Activated CD8-positive, alpha-beta T cell treated with anti-CD3 and anti-CD28 coated beads for 36 hours (primary cell): ENCODE measurements at regions of chr17 and their contacts with region 1.

Region 1: DNA sequence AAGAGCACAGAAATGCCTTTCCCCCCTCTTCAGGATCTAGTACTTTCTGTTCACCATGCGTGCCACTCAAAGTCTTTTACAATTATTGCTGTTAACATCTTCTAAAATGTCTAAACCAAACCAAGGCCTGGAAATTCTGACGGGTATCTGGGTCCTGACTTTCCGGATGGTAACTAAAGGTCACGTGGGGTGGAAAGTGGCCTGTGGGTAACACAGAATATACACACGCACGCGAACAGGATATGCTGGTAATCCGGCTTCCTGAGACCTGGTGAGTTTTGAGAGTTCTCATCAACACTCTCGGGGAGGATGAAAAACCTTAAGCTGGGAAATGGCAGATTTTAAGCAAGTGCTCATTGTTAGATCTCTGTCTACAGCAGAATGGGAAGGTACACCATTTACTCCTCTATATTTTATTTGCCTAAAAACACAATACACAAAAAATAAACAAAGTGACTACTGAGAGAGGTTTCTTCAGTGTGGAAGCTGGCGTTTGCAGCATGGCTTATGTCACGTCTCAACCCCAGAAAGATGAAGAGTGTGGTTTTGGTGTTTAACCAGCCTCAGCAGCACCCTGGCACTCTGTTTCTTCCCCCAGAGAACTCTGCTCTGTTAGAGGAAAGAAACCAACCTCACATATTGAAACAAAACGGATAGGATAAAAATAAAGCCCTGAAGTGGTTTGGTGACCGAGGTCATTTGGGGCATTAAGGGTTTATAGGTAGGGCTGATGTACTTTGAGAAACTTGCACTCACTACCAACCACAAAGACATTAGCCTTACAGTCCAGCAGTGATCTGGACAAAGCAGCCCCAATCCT is 37.3 kb downstream of the SMG6 start:
- DNase-seq: peak; percentile 98
- ATAC-seq: peak; percentile 77
- H3K4me3 Mint-ChIP-seq: peak overlapping the region; percentile 79
- H3K27ac Mint-ChIP-seq: peak overlapping the region; percentile 98
- H3K4me1 Mint-ChIP-seq: peaks cover 82% of the 10 kb centered on the region
- H3K27me3 Mint-ChIP-seq: no peaks in the 10 kb centered on the region
- CTCF ChIP-seq: no peak

Region 2: DNA sequence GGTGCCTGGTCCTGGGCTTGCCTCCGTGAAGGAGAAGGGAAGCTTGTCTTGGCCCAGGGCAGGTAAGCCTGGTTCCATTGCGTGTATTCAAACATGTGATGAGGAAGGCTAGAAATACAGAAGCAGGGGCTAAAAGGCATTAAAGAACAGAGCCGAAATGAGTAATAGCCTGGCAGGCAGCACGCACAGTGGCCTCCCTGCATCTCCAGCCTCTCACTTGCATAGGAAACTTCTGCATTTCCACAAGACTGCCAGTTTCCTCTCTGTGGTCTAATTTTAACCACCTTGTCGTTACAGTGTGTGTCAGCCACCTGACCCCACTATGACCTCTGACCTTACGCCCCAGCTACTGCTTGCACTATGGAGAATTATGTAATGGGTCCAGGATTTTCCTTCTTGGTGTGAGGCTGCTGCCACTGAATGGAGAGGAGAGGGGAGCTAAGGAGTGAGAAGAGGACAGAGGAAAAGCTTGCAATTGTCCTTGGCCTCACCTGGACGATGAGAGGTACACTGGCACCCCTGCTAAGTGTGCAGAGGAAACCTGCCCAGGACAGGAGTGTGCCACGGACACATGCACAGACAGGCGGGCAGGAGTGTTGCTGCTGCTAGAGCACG is 178.6 kb before region 1 on chr17:
- CTCF ChIA-PET with region 1: interaction called, 3 read pairs
- POLR2A ChIA-PET with region 1: interaction called, 4 read pairs
- intact Hi-C with region 1: loop called (anchors 5 kb)
- DNase-seq: peak; percentile 87
- ATAC-seq: peak; percentile 59
- H3K4me3 Mint-ChIP-seq: no peak overlapping the region
- H3K27ac Mint-ChIP-seq: peak overlapping the region; percentile 58
- H3K4me1 Mint-ChIP-seq: peaks cover 74% of the 10 kb centered on the region
- H3K27me3 Mint-ChIP-seq: no peaks in the 10 kb centered on the region
- CTCF ChIP-seq: no peak

Region 3: GRCh38 chr17:2146132-2146871 is 120.0 kb before region 1 on chr17:
- CTCF ChIA-PET with region 1: no interaction called
- POLR2A ChIA-PET with region 1: no interaction called
- intact Hi-C with region 1: no loop called
- DNase-seq: no peak
- ATAC-seq: no peak
- H3K4me3 Mint-ChIP-seq: no peak overlapping the region
- H3K27ac Mint-ChIP-seq: no peak overlapping the region
- H3K4me1 Mint-ChIP-seq: peaks cover 14% of the 10 kb centered on the region
- H3K27me3 Mint-ChIP-seq: no peaks in the 10 kb centered on the region
- CTCF ChIP-seq: no peak

Region 4: GRCh38 chr17:2190014-2190413 is 76.2 kb before region 1 on chr17:
- CTCF ChIA-PET with region 1: no interaction called
- POLR2A ChIA-PET with region 1: no interaction called
- intact Hi-C with region 1: no loop called
- DNase-seq: no peak
- ATAC-seq: no peak
- H3K4me3 Mint-ChIP-seq: no peak overlapping the region
- H3K27ac Mint-ChIP-seq: no peak overlapping the region
- H3K4me1 Mint-ChIP-seq: peaks cover 38% of the 10 kb centered on the region
- H3K27me3 Mint-ChIP-seq: no peaks in the 10 kb centered on the region
- CTCF ChIP-seq: no peak

Region 5: GRCh38 chr17:2253768-2254406 is 12.4 kb before region 1 on chr17:
- CTCF ChIA-PET with region 1: interaction called, 28 read pairs
- POLR2A ChIA-PET with region 1: interaction called, 107 read pairs
- intact Hi-C with region 1: no loop called
- DNase-seq: peak; percentile 64
- ATAC-seq: peak; percentile 87
- H3K4me3 Mint-ChIP-seq: peak overlapping the region; percentile 45
- H3K27ac Mint-ChIP-seq: peak overlapping the region; percentile 89
- H3K4me1 Mint-ChIP-seq: peaks cover 73% of the 10 kb centered on the region
- H3K27me3 Mint-ChIP-seq: no peaks in the 10 kb centered on the region
- CTCF ChIP-seq: no peak

Region 6: DNA sequence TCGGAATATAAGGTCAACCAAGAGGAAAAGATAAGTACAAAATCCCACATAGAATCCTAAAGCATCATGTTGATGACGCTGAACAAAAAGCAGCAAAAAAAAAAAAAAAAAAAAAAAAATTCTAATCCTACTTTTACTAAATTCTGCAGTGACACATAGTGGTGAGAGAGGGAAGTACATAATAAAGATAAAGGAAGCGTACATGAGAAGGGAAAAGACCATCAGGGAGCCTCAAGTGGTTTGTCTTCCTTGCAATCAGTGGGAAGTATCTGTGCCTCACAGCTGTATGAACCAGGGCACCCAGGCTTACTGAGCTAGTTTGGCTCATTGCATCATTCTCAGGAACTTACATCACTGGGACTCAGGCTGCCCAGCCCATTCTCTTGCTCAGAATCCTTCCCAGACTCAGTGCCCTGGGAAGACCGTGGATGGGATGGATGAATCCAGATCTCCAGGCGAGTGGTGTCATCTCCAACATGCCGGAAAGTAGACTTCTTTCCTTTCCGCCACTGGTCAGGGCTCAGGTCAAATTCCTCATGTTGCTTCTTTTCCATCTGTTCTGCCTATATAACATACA is 16.1 kb after region 1 on chr17:
- CTCF ChIA-PET with region 1: interaction called, 38 read pairs
- POLR2A ChIA-PET with region 1: interaction called, 9 read pairs
- intact Hi-C with region 1: no loop called
- DNase-seq: no peak
- ATAC-seq: peak; percentile 81
- H3K4me3 Mint-ChIP-seq: no peak overlapping the region
- H3K27ac Mint-ChIP-seq: peak overlapping the region; percentile 77
- H3K4me1 Mint-ChIP-seq: peaks cover 33% of the 10 kb centered on the region
- H3K27me3 Mint-ChIP-seq: no peaks in the 10 kb centered on the region
- CTCF ChIP-seq: peak; percentile 73